ENCODE measurements at regions of chr10 and their contacts with region 1.

Region 1: DNA sequence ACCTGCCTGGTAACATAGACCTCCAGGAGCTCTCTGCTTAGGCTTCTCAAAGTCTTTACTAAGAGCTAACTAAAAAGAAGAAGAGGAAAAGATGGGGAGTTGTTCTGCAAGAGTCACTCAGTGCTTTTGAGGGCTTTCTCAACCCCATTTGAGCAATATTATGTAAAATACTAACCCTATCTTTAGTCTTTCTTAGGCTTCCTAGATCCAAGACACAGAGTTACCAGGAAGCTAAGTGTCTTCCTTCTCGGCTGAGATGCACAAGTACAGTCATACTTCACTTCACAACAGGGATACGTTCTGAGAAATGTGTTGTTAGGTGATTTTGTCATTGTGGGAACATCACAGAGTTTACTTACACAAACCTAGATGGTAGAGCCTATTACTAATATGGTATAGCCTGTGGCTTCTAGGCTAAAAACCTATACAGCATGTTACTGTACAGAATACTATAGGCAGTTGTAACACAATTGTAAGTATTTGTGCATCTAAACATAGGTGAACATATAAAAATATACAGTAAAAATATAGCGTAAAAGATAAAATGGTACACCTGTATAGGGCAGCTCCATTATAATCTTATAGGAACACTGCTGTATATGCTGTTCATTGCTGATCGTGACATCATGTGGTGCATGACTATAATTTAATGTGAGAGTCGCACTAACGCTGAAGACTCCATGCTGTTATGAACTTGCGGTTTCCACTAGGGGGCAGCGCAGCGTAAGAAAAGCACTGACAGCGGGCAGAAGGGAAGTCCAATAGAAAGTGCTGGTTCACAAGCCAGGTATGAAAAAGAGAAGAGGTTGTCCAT is 16.3 kb downstream of the ANKRD22 start:
- DNase-seq: peak; percentile 88
- H3K4me3 ChIP-seq: no peak overlapping the region
- H3K27ac ChIP-seq: no peak overlapping the region
- H3K4me1 ChIP-seq: peaks cover 15% of the 10 kb centered on the region
- CTCF ChIP-seq: peak; percentile 99

Region 2: GRCh38 chr10:89029785-89030437 is 194.6 kb after region 1 on chr10:
- CTCF ChIA-PET with region 1: no interaction called
- POLR2A ChIA-PET with region 1: no interaction called
- intact Hi-C with region 1: loop called (anchors 5 kb)
- DNase-seq: peak; percentile 77
- H3K4me3 ChIP-seq: no peak overlapping the region
- H3K27ac ChIP-seq: no peak overlapping the region
- H3K4me1 ChIP-seq: no peaks in the 10 kb centered on the region
- CTCF ChIP-seq: peak; percentile 94

Region 3: DNA sequence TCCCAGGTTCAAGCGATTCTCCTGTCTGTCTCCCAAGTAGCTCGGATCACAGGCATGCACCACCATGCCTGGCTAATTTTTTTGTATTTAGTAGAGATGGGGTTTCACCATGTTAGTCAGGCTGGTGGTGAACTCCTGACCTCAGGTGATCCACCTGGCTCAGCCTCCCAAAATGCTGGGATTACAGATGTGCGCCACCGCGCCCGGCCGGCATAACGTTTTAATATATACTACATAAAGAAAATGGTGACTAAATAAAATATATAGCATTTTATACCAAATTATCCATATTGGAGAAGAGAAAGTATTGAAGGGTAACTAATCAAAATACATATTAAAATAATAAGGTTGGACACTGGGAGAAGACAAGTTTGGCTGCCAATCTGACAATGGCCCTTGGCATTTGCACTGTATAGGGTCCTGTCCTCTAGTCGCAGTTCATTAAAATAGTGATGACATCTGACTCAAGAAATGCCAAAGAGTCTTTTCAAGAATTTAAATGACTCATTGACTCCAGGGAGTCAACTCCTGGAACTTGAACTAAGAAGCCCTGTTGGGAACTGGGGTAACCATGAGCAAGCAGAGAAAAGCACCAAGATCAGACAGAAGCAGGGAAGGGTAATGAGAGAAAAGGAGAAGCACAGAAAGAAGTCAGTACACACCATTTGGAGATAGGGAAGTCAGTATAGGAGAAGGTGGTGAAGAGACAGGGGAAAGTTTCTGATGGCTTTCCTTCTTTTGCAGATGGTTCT is 280.7 kb after region 1 on chr10:
- CTCF ChIA-PET with region 1: no interaction called
- POLR2A ChIA-PET with region 1: no interaction called
- intact Hi-C with region 1: no loop called
- DNase-seq: no peak
- H3K4me3 ChIP-seq: no peak overlapping the region
- H3K27ac ChIP-seq: no peak overlapping the region
- H3K4me1 ChIP-seq: no peaks in the 10 kb centered on the region
- CTCF ChIP-seq: no peak

Measured in OCI-LY7 (cell line).